Activated naive CD4-positive, alpha-beta T cell treated with anti-CD3 and anti-CD28 coated beads, Interleukin-2, amount 10 ng/mL, durations not matched to agents 7 days and 5 days (primary cell): ENCODE measurements at regions of chr10 and their contacts with region 1.

Region 1: GRCh38 chr10:73644015-73644743 is 2.9 kb upstream of the MYOZ1 start:
- DNase-seq: peak; percentile 68
- H3K4me3 Mint-ChIP-seq: no peak overlapping the region
- H3K27ac Mint-ChIP-seq: no peak overlapping the region
- H3K4me1 Mint-ChIP-seq: peaks cover 13% of the 10 kb centered on the region
- H3K27me3 Mint-ChIP-seq: peaks cover 75% of the 10 kb centered on the region

Region 2: GRCh38 chr10:73263948-73264347 is 380.2 kb before region 1 on chr10:
- CTCF ChIA-PET with region 1: interaction called, 14 read pairs
- DNase-seq: no peak
- H3K4me3 Mint-ChIP-seq: no peak overlapping the region
- H3K27ac Mint-ChIP-seq: no peak overlapping the region
- H3K4me1 Mint-ChIP-seq: peaks cover 3% of the 10 kb centered on the region
- H3K27me3 Mint-ChIP-seq: no peaks in the 10 kb centered on the region

Region 3: DNA sequence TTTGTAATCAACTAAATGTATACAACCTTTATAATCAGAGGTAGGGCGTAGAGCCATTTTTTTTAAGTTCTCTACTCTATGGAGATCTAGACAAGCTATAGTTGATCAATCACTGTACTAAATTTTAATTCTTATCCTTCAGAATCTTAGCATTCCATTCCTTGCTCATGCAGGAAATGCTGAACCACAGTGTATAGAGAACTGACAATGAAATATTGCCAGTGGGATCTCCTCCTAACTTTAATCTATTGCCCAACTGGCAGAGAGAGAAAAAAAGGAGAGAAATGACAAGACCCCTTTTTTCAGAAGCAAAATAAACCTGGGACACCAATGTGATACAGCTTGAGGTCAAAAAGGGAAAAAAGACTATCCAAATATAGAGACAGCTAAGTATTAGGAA is 121.9 kb before region 1 on chr10:
- CTCF ChIA-PET with region 1: interaction called, 14 read pairs
- DNase-seq: no peak
- H3K4me3 Mint-ChIP-seq: no peak overlapping the region
- H3K27ac Mint-ChIP-seq: no peak overlapping the region
- H3K4me1 Mint-ChIP-seq: no peaks in the 10 kb centered on the region
- H3K27me3 Mint-ChIP-seq: no peaks in the 10 kb centered on the region

Region 4: DNA sequence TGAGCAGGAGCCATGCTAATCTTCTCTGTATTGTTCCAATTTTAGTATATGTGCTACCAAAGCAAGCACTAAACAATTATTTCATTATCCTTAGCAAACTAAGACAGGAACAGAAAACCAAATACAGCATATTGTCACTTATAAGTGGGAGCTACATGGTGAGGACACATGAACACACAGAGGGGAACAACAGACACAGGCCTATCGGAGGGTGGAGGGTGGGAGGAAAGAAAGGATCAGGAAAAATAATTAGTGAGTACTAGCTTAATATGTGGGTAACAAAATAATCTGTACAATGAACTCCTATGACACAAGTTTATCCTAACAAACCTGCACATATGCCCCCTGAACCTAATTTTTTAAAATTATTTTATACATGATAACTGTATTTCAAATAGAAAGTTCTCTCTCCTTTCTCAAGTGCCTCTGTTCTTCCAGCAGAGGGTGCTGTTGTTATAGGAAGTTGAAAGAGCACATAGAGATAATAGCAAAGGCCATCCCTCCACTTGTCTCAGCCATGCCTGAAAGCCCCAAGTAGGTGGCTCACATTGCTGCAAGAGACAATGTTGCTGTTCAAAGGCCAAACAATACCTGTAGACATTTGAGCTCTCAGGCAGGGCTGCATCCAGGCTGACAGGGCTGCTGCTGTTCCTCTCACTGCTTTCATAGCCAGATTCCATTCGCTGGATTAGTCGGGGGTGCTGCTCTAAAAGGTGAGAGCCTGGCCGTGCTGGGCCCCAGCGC is 114.9 kb before region 1 on chr10:
- CTCF ChIA-PET with region 1: interaction called, 134 read pairs
- DNase-seq: peak; percentile 60
- H3K4me3 Mint-ChIP-seq: no peak overlapping the region
- H3K27ac Mint-ChIP-seq: no peak overlapping the region
- H3K4me1 Mint-ChIP-seq: no peaks in the 10 kb centered on the region
- H3K27me3 Mint-ChIP-seq: no peaks in the 10 kb centered on the region

Region 5: GRCh38 chr10:73629165-73629564 is 15.0 kb before region 1 on chr10:
- CTCF ChIA-PET with region 1: interaction called, 20 read pairs
- DNase-seq: no peak
- H3K4me3 Mint-ChIP-seq: no peak overlapping the region
- H3K27ac Mint-ChIP-seq: no peak overlapping the region
- H3K4me1 Mint-ChIP-seq: peaks cover 18% of the 10 kb centered on the region
- H3K27me3 Mint-ChIP-seq: peaks cover 11% of the 10 kb centered on the region